Gastrocnemius medialis (tissue), 4 donors: ENCODE measurements at regions of chr11 and their contacts with region 1.

Region 1: DNA sequence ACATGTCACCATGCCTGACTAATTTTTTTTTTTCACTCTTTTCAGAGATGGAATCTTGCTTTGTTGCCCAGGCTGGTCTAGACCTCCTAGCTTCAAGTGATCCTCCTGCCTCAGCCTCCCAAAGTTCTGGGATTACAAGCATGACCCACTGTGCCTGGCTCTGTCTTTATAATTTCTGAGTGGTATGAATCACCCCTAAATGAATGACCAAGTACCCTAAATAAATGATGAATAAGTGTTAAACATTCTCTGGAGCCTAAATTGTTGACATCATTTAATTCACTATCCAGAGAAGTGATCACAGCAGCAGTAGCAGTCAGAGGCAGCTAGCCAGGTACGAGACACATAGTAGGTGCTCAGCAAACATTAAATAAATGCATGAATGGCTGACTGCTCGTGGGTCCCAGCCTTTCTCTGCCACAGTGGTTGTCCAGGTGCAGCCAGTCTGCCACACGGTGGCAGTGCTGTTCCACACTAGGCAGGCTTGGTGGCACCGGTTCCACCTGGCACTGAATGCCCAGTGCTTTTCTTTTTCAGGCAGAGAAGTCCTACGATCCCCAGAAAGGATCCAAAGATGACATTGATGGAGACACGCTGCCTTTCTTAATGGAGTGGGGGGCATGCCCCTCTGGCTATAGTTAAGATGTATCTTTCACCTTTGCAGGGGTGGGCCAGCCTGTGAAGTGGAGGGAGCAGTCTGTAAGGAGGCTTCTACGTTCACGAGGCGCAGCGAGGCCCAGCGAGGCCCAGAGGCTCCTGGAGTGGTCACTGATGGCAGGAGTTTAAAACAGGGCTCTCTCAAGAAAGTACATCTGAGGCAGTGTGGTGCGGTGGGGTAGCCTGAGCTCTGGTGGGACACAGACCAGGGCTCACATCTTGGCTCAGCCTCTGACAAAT is 8.7 kb upstream of the TTC12 start:
- DNase-seq: peak; percentile 38 to 69
- ATAC-seq: peak; percentile 74 to 94
- H3K4me3 ChIP-seq: no peak overlapping the region
- H3K27ac ChIP-seq: no peak overlapping the region
- H3K4me1 ChIP-seq: no peaks in the 10 kb centered on the region
- H3K27me3 ChIP-seq: no peaks in the 10 kb centered on the region
- CTCF ChIP-seq: peak; percentile 86 to 92 (median 90)
- POLR2A ChIP-seq: no peak

Region 2: GRCh38 chr11:113363406-113363805 is 57.7 kb after region 1 on chr11:
- in situ Hi-C with region 1: loop called in 1 of 4 experiments (anchors 10 kb)
- intact Hi-C with region 1: no loop called
- DNase-seq: no peak
- ATAC-seq: no peak
- H3K4me3 ChIP-seq: no peak overlapping the region
- H3K27ac ChIP-seq: no peak overlapping the region
- H3K4me1 ChIP-seq: no peaks in the 10 kb centered on the region
- H3K27me3 ChIP-seq: no peaks in the 10 kb centered on the region
- CTCF ChIP-seq: no peak
- POLR2A ChIP-seq: no peak

Region 3: GRCh38 chr11:113474362-113475159 is 168.9 kb after region 1 on chr11:
- in situ Hi-C with region 1: no loop called
- intact Hi-C with region 1: no loop called
- DNase-seq: peak; percentile 7 to 31
- ATAC-seq: peak; percentile 56 to 85
- H3K4me3 ChIP-seq: no peak overlapping the region
- H3K27ac ChIP-seq: no peak overlapping the region
- H3K4me1 ChIP-seq: no peaks in the 10 kb centered on the region
- H3K27me3 ChIP-seq: peaks cover 51 to 65% (median 61%) of the 10 kb centered on the region in 3 donors
- CTCF ChIP-seq: no peak
- POLR2A ChIP-seq: no peak

Region 4: DNA sequence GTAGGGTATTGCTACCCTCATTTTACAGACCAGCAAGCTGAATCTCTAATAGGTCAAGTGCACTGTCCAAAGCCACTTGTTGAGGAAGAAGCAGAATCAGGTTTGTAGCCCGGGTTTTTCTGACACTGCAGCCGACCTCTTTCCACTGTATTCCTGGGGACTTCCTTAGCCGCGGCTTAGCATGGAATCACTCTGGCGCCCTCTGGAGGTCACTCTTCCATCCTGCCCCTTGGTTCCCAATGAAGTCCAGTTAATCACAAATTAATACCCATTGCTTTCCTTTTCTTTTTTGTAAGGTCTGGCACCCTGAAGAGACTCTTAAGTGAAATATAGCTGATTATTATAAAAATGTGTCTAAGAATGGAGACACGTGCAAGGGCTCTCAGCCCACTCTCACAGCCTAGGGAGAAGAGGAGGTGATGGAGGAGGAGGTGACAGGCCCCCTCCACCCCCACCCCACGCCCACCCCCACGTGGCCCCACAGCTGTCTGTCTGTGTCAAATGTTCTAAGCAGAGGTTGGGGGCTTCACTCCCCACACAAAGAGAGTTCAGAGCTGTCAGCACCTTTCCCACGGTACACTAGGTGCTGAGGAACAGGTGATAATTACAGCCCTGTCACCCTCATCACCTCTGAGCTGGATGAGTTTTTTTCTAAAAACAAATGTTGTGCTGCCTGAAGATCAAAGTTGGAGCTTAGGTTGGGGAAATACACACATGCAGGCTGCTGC is 227.2 kb after region 1 on chr11:
- in situ Hi-C with region 1: loop called (anchors 5 to 10 kb)
- intact Hi-C with region 1: loop called (anchors 1 kb)
- DNase-seq: peak; percentile 35 to 48
- ATAC-seq: peak; percentile 76 to 78
- H3K4me3 ChIP-seq: no peak overlapping the region
- H3K27ac ChIP-seq: no peak overlapping the region
- H3K4me1 ChIP-seq: peaks cover 5 to 7% of the 10 kb centered on the region in 2 donors
- H3K27me3 ChIP-seq: no peaks in the 10 kb centered on the region
- CTCF ChIP-seq: peak; percentile 55 to 87 (median 66)
- POLR2A ChIP-seq: no peak

Region 5: DNA sequence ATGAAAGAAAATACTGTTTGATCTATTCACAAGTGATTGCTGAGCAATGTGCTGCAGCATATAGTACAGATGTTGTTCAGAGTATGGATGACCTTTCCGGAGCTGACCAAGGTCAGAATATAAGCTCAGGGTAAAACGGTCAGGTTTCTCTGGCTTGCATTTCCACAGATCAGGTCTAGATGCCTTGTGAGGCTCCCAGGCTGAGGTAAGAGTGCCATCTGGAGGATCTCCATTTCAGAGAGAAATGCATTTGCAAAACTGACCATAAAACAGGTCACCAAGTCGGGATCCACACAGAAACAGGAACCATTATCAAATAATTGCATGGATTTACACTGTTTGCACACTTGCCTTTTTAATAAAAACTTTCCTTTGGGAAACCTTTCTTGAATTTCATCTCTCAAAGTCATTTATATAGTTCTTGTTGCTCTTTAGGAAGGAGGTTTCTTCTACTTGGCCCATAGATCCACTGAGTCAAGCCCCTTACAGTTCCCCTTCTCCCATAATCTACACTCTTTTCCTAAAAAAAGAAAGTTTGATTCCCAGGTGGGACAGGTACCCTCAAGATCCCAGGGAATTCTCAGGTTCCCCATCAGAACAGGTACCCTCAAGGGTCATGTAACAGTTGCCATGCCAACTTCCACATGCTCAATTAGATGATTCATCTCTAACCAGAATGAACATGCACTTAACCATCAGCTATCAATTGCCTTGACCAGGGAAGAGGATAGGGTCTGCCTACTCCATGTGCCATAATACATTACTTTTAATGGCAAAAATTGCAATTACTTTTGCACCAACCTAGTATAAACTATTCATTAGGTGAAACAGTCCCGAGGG is 425.4 kb after region 1 on chr11:
- in situ Hi-C with region 1: loop called (anchors 5 to 10 kb)
- intact Hi-C with region 1: loop called (anchors 2 kb)
- DNase-seq: peak; percentile 17 to 64
- ATAC-seq: peak; percentile 81 to 97
- H3K4me3 ChIP-seq: no peak overlapping the region
- H3K27ac ChIP-seq: no peak overlapping the region
- H3K4me1 ChIP-seq: peaks cover 5 to 14% of the 10 kb centered on the region in 2 donors
- H3K27me3 ChIP-seq: no peaks in the 10 kb centered on the region
- CTCF ChIP-seq: peak; percentile 41 to 79 (median 71)
- POLR2A ChIP-seq: no peak

Region 6: DNA sequence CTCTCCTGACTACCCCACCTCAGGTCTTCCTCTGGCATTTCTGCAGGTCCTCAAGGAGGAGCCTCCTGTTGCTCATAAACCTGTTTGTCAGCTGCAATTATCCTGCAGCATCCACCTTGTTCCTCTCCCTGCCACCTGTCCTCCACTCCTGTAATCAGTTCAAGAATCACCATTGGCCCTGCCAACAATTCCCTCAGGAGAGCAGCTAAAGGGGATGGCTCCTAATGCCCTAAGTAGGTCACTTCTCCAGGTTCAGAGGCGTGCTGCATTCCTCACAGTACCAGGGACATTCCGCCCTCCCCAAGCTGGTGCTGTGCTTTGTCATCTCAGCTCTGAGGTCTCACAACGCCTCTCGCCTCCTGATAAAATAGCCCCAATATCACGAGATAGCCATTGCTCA is 476.0 kb after region 1 on chr11:
- in situ Hi-C with region 1: loop called in 1 of 4 experiments (anchors 10 kb)
- intact Hi-C with region 1: no loop called
- DNase-seq: no peak
- ATAC-seq: no peak
- H3K4me3 ChIP-seq: no peak overlapping the region
- H3K27ac ChIP-seq: no peak overlapping the region
- H3K4me1 ChIP-seq: peaks cover 8% of the 10 kb centered on the region in 2 donors
- H3K27me3 ChIP-seq: no peaks in the 10 kb centered on the region
- CTCF ChIP-seq: no peak
- POLR2A ChIP-seq: no peak

Region 7: GRCh38 chr11:113796663-113797259 is 491.1 kb after region 1 on chr11:
- in situ Hi-C with region 1: loop called in 1 of 4 experiments (anchors 10 kb)
- intact Hi-C with region 1: loop called (anchors 1 kb)
- DNase-seq: no peak
- ATAC-seq: peak; percentile 96 to 99
- H3K4me3 ChIP-seq: no peak overlapping the region
- H3K27ac ChIP-seq: peak overlapping the region in 2 of 4 donors; percentile 21 to 48
- H3K4me1 ChIP-seq: peaks cover 0 to 5% of the 10 kb centered on the region in 2 donors
- H3K27me3 ChIP-seq: no peaks in the 10 kb centered on the region
- CTCF ChIP-seq: peak; percentile 57 to 75 (median 65)
- POLR2A ChIP-seq: no peak